Activated CD4-positive, alpha-beta memory T cell treated with anti-CD3 and anti-CD28 coated beads for 36 hours (primary cell): ENCODE measurements at regions of chr19 and their contacts with region 1.

Region 1: DNA sequence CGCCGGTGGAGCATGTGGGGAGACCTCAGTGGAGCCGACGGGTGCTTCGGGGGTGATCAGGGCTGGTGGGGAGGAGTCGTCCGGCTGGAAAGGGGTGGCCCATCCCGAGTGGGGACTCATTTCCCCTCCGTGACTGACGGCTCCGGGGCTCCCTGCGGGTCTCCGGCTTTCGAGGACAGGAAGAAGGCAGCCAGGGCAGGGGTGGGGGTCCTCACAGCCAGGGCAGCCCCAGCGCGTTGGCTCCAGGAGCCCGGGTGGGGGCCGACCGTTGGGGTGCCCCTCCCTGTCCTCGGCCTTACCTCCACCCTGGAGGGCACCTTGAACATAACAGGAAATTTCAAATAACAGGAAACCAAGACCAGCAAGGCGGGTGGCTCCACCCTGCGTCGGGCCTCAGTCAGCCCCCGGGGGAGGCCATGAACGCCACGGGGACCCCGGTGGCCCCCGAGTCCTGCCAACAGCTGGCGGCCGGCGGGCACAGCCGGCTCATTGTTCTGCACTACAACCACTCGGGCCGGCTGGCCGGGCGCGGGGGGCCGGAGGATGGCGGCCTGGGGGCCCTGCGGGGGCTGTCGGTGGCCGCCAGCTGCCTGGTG is at the start of gene S1PR4:
- DNase-seq: peak; percentile 78
- H3K4me3 Mint-ChIP-seq: peak within 1 kb of the TSS; percentile 98
- H3K27ac Mint-ChIP-seq: peak within 1 kb of the TSS; percentile 97
- H3K4me1 Mint-ChIP-seq: peaks cover 31% of the 10 kb centered on the region
- H3K27me3 Mint-ChIP-seq: no peaks in the 10 kb centered on the region
- total RNA-seq, gene S1PR4: 32.7 to 34.0 TPM

Region 2: GRCh38 chr19:3073159-3073563 is 105.3 kb before region 1 on chr19:
- CTCF ChIA-PET with region 1: no interaction called
- POLR2A ChIA-PET with region 1: no interaction called
- intact Hi-C with region 1: no loop called
- DNase-seq: no peak
- H3K4me3 Mint-ChIP-seq: no peak overlapping the region
- H3K27ac Mint-ChIP-seq: no peak overlapping the region
- H3K4me1 Mint-ChIP-seq: peaks cover 4% of the 10 kb centered on the region
- H3K27me3 Mint-ChIP-seq: no peaks in the 10 kb centered on the region

Region 3: GRCh38 chr19:3132971-3133792 is 45.3 kb before region 1 on chr19:
- CTCF ChIA-PET with region 1: interaction called, 4 read pairs
- POLR2A ChIA-PET with region 1: interaction called, 3 read pairs
- intact Hi-C with region 1: loop called (anchors 2 kb)
- DNase-seq: peak; percentile 95
- H3K4me3 Mint-ChIP-seq: peak overlapping the region; percentile 42
- H3K27ac Mint-ChIP-seq: peak overlapping the region; percentile 85
- H3K4me1 Mint-ChIP-seq: peaks cover 34% of the 10 kb centered on the region
- H3K27me3 Mint-ChIP-seq: no peaks in the 10 kb centered on the region